ENCODE measurements at regions of chr4 and their contacts with region 1.

Region 1: GRCh38 chr4:54228056-54228527 is 1.0 kb upstream of the PDGFRA start:
- DNase-seq: peak; percentile 86 to 92 (median 91)
- H3K4me3 ChIP-seq: peak overlapping the region; percentile 50 to 73 (median 66)
- H3K27ac ChIP-seq: no peak overlapping the region
- H3K4me1 ChIP-seq: peaks cover 0 to 18% (median 13%) of the 10 kb centered on the region in 3 donors
- H3K27me3 ChIP-seq: peaks cover 20% of the 10 kb centered on the region
- CTCF ChIP-seq: peak; percentile 48

Region 2: DNA sequence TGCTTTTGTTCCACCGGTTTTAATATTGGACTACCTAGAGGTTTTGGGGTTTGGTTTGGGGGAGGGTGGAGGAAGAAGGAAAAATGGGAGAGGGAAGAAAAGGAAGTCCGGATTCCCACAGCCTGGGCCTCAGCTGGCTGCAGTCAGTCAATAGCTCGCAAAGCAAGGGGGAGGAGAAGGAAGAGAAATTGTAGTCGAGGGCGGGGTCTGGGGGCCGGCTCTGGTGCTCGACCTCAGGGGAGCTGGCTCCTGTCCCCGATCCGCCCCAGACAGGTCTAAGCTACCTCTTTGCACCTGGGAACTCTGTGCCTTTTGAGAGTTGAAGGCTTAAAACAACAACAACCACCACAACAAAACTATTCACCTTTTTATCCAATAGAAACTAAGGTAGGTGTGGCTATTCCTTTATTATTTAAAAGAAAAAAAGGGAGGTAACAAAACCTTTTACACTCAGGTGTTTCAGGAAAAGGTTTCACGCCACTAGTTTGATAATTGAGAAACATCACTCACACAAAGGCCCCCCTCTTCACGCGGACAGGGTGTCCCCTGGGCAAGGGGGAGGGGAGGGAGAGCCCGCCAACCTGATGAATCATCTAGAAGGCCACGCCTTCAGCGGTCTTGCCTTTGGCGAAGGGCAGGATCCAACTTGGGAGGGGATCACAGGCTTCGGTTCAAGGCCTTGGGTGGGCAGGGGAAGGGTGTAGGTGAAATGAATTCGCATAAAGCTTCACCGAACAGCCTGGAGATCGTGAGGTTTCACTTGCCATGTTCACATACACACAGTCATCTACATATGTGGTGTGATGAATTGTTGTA is 635.2 kb before region 1 on chr4:
- intact Hi-C with region 1: no loop called
- DNase-seq: peak; percentile 72 to 94 (median 77)
- H3K4me3 ChIP-seq: peak overlapping the region; percentile 31 to 76 (median 41)
- H3K27ac ChIP-seq: peak overlapping the region; percentile 79
- H3K4me1 ChIP-seq: peaks cover 0 to 3% (median 2%) of the 10 kb centered on the region in 3 donors
- H3K27me3 ChIP-seq: no peaks in the 10 kb centered on the region
- CTCF ChIP-seq: no peak

Region 3: GRCh38 chr4:53914313-53915016 is 313.6 kb before region 1 on chr4:
- intact Hi-C with region 1: loop called (anchors 10 kb)
- DNase-seq: no peak
- H3K4me3 ChIP-seq: no peak overlapping the region
- H3K27ac ChIP-seq: no peak overlapping the region
- H3K4me1 ChIP-seq: no peaks in the 10 kb centered on the region
- H3K27me3 ChIP-seq: no peaks in the 10 kb centered on the region
- CTCF ChIP-seq: no peak

Region 4: GRCh38 chr4:53943345-53944085 is 284.6 kb before region 1 on chr4:
- intact Hi-C with region 1: no loop called
- DNase-seq: no peak
- H3K4me3 ChIP-seq: no peak overlapping the region
- H3K27ac ChIP-seq: no peak overlapping the region
- H3K4me1 ChIP-seq: no peaks in the 10 kb centered on the region
- H3K27me3 ChIP-seq: no peaks in the 10 kb centered on the region
- CTCF ChIP-seq: no peak

Region 5: GRCh38 chr4:54384563-54384962 is 156.5 kb after region 1 on chr4:
- intact Hi-C with region 1: no loop called
- DNase-seq: peak in 2 of 5 donors; percentile 24 to 47
- H3K4me3 ChIP-seq: no peak overlapping the region
- H3K27ac ChIP-seq: no peak overlapping the region
- H3K4me1 ChIP-seq: no peaks in the 10 kb centered on the region
- H3K27me3 ChIP-seq: no peaks in the 10 kb centered on the region
- CTCF ChIP-seq: peak; percentile 36